K562 (cell line): ENCODE measurements at regions of chr18 and their contacts with region 1.

Region 1: GRCh38 chr18:30971338-30971956 is 71.1 kb downstream of the DSC3 start:
- DNase-seq: peak; percentile 12 to 56 (median 18)
- ATAC-seq: peak; percentile 83
- H3K4me3 ChIP-seq: no peak overlapping the region
- H3K27ac ChIP-seq: no peak overlapping the region
- H3K4me1 ChIP-seq: no peaks in the 10 kb centered on the region
- H3K27me3 ChIP-seq: no peaks in the 10 kb centered on the region
- CTCF ChIP-seq: peak in 2 of 3 experiments; percentile 50 to 62; a peak in 4 of 6 replicates
- EP300 ChIP-seq: no peak
- POLR2A ChIP-seq: no peak
- RAD21 ChIP-seq: peak; percentile 70 to 73

Region 2: DNA sequence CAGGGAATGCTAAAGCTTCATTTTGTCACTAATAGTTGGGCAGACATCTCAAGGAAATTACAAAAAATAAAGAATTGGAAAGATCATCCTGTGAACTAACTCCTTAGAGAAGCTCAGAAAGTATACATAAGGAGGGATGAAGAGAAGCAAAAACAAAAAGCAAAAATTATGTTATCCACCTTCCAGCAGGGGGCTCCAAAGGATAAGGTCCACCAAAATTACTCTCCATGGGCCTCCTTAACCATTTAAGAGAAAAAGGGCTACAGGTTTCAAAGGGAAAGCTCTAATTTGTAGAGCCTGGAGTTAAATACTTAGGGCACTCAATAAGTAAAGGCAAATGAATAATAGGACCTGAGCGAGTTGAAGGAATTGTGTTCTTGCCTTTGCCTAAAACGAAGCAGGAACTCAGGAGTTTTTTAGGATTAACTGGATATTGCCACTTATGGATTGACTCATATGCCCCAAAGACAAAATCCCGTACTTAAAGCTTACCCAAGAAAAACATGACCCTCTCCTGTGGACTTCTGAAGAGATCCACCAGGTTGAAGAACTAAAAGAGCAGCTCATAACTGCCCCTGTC is 1096.8 kb before region 1 on chr18:
- CTCF ChIA-PET with region 1: interaction called, 5 read pairs
- POLR2A ChIA-PET with region 1: no interaction called
- in situ Hi-C with region 1: no loop called
- intact Hi-C with region 1: loop called (anchors 1 kb)
- DNase-seq: peak; percentile 11 to 58 (median 16)
- ATAC-seq: 0 out of 3 replicates have a peak, but pooled peaks have one; percentile 46
- H3K4me3 ChIP-seq: no peak overlapping the region
- H3K27ac ChIP-seq: no peak overlapping the region
- H3K4me1 ChIP-seq: no peaks in the 10 kb centered on the region
- H3K27me3 ChIP-seq: no peaks in the 10 kb centered on the region
- CTCF ChIP-seq: peak in 2 of 3 experiments; percentile 43 to 60; a peak in 4 of 6 replicates
- EP300 ChIP-seq: no peak
- POLR2A ChIP-seq: no peak
- RAD21 ChIP-seq: peak; percentile 66 to 71

Region 3: GRCh38 chr18:30957066-30957465 is 14.4 kb before region 1 on chr18:
- CTCF ChIA-PET with region 1: no interaction called
- POLR2A ChIA-PET with region 1: no interaction called
- in situ Hi-C with region 1: no loop called
- intact Hi-C with region 1: no loop called
- DNase-seq: no peak
- ATAC-seq: no peak
- H3K4me3 ChIP-seq: no peak overlapping the region
- H3K27ac ChIP-seq: no peak overlapping the region
- H3K4me1 ChIP-seq: no peaks in the 10 kb centered on the region; a peak in 1 of 5 replicates
- H3K27me3 ChIP-seq: no peaks in the 10 kb centered on the region
- CTCF ChIP-seq: no peak
- EP300 ChIP-seq: no peak
- POLR2A ChIP-seq: no peak
- RAD21 ChIP-seq: no peak

Region 4: DNA sequence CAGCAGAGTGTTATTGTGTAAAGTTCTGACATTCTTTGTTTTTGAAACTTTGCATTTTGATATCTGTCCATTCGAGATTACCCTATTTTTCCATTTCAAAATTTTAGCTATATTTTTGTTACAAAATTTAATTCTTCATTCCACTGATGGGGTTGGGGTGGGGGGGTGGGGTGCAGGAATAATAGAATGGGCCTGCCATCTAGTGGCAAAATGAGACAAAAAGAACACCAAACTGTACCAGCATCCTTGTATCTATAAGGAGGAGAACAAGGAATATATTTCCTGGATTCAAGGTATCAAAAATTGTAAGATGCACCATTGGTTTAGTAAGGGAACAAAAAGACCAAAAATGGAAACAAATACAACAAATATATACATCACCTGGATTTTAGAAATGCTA is 592.3 kb after region 1 on chr18:
- CTCF ChIA-PET with region 1: no interaction called
- POLR2A ChIA-PET with region 1: no interaction called
- in situ Hi-C with region 1: no loop called
- intact Hi-C with region 1: loop called (anchors 5 kb)
- DNase-seq: peak; percentile 21 to 55 (median 40)
- ATAC-seq: peak; percentile 64; the same call in 2 of the 3 replicates
- H3K4me3 ChIP-seq: no peak overlapping the region
- H3K27ac ChIP-seq: no peak overlapping the region
- H3K4me1 ChIP-seq: no peaks in the 10 kb centered on the region
- H3K27me3 ChIP-seq: peaks cover 0 to 9% of the 10 kb centered on the region in 2 experiments; a peak in 3 of 5 replicates
- CTCF ChIP-seq: peak in 1 of 3 experiments; percentile 44; a peak in 2 of 6 replicates
- EP300 ChIP-seq: no peak
- POLR2A ChIP-seq: no peak
- RAD21 ChIP-seq: peak in 1 of 2 experiments; percentile 43; a peak in 2 of 4 replicates